IMR-90 (cell line): ENCODE measurements at regions of chr12 and their contacts with region 1.

Region 1: DNA sequence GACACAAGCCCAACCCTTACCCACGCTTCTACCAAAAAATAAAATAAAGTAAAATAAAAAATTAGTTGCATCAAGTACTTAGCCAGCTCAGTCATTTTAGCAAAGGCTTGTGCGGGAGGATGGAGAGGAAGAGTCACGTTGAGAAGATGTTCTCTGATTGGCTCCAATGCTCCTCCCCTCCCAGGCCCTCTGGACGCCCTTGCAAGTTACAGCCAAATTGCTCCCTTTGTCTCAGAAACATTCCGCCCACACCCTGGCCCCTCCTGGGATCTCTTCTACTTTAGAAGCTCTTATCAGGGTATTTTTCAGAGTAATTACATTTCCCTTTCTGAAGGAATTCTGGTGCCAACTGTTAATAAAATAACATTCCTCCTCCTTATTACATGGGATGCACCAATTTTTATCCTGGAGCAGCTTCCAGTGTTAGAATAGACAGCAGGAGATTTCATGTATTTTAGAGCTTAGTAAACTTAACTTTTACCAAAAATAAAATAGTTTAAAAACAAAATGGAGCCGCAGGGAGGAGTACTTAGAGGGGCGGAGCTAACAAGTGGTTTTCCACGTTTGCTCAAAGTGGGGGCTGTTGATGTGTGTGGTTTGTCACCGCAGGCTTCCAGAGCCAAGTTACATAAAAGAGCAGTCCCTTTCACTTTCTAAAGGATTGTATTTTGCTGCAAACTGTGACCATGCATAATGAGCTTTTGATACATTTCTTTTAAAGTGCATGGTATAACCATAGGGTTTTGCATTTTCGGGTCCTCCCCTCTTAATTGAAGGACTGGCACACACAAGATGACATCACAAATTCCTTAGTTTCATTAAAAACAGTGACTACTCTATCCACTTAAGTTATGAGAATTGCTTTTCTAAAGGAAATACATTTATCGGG is 71.7 kb upstream of the RAP1B start:
- DNase-seq: peak; percentile 26
- ATAC-seq: peak; percentile 46; the same call in 1 of the 2 replicates
- H3K4me3 ChIP-seq: no peak overlapping the region
- H3K27ac ChIP-seq: no peak overlapping the region
- H3K4me1 ChIP-seq: peaks cover 2% of the 10 kb centered on the region; the same call in 1 of the 2 replicates
- H3K27me3 ChIP-seq: no peaks in the 10 kb centered on the region
- CTCF ChIP-seq: no peak
- POLR2A ChIP-seq: no peak
- RAD21 ChIP-seq: no peak

Region 2: DNA sequence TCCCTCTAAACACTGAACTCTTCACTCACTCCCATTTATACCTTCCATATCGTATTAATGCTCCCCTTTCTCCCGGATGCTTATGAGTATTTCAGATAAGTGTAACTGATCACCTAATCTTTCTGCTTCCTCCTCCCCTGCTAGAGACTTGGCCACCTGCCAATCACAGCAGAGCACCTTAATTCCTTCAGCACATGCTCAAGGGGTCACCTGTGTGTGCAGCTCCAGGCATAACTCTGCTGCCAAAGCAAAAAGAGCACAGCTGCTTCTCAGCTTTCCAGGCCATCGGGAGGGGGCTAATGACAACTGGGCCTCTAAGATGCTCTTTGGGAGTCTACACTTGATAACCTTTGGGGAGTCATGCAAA is 997.4 kb before region 1 on chr12:
- CTCF ChIA-PET with region 1: no interaction called
- POLR2A ChIA-PET with region 1: no interaction called
- dilution Hi-C with region 1: no loop called
- in situ Hi-C with region 1: no loop called
- intact Hi-C with region 1: loop called (anchors 10 kb)
- DNase-seq: no peak
- ATAC-seq: no peak
- H3K4me3 ChIP-seq: no peak overlapping the region
- H3K27ac ChIP-seq: no peak overlapping the region
- H3K4me1 ChIP-seq: no peaks in the 10 kb centered on the region
- H3K27me3 ChIP-seq: peaks cover 12% of the 10 kb centered on the region
- CTCF ChIP-seq: no peak
- POLR2A ChIP-seq: no peak
- RAD21 ChIP-seq: no peak